Activated CD8-positive, alpha-beta T cell treated with anti-CD3 and anti-CD28 coated beads, Interleukin-2, amount 10 ng/mL, durations not matched to agents 7 days and 5 days (primary cell): ENCODE measurements at regions of chr1 and their contacts with region 1.

Region 1: DNA sequence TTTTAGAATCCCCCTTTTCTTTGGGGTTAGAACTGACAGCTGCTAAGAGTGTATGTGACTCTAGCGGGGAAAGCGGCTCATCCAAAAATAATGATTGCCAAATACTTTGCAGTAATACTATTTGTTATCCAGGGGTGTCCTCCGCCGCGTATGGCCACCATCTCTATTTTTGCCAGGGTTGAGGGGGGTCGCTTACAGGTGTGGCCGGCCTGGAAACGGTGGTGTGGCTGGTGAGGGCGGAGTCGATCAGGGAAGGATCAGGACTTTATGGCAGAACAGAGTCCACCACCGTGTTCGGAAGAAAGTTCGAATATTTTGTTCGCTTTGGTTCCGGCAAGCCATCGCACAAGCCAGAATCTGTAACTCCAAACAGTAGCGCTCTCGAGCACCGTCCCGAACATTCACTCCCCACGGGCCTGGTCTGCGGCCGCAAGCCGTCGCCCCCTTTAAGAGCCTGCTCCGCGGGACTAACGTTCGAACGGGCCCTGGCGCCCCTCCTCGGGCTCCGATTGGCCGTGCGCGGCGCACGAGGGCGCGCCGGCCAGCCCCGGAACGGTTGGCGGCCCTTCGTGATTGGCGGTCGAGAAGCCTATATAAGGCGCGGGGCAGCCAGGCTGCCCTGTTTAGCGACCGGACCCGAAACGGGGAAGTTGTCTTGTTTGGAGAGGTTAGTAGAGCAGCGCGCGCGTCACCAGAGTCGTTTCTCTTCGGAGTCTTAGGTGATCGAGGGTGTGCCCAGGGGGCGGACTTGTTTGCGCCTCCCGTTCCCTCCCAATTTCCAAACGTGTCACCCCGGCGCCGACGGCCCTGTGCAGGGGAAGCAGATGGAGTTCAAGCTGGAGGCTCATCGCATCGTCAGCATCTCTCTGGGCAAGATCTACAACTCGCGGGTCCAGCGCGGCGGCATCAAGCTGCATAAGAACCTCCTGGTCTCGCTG is at the start of gene IER5:
- DNase-seq: peak; percentile 97
- ATAC-seq: peak; percentile 80
- H3K4me3 Mint-ChIP-seq: peak within 1 kb of the TSS; percentile 97
- H3K27ac Mint-ChIP-seq: peak within 1 kb of the TSS; percentile 97
- H3K4me1 Mint-ChIP-seq: peaks cover 53% of the 10 kb centered on the region
- H3K27me3 Mint-ChIP-seq: peaks cover 3% of the 10 kb centered on the region
- total RNA-seq, gene IER5: 37.2 to 38.0 TPM

Region 2: DNA sequence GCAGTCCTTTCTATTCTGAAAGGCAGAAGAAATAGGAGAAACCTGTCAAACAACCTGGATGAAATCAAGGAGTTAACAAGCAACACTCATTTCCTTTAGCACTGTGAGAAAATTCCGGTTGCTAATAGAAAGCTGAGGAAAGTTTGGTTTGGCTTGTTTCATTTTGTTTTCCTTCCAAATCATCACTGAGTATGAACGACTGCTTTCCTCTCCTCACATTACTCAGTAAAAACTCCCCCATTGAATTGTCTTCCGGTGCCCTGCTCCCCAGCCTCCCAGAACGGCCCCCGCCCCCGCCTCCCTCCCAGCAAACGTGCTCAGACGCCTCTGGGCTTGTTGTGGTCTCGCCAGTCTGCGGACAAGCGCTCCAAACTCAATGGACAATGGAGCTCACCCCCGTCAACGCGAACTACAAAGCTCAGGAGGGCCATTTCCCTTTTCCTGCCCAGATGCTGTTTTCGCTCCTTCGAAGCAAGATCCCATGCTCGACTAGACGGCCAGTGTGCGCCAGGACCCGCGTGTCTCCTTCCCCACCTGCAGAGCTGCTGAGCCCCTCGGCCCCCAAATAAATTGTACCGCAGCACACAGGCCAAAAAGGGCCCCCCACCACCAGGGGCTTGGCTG is 66.4 kb before region 1 on chr1:
- CTCF ChIA-PET with region 1: interaction called, 3 read pairs
- POLR2A ChIA-PET with region 1: interaction called, 36 read pairs
- DNase-seq: peak; percentile 72
- ATAC-seq: peak; percentile 38
- H3K4me3 Mint-ChIP-seq: peak overlapping the region; percentile 93
- H3K27ac Mint-ChIP-seq: peak overlapping the region; percentile 93
- H3K4me1 Mint-ChIP-seq: peaks cover 51% of the 10 kb centered on the region
- H3K27me3 Mint-ChIP-seq: peaks cover 18% of the 10 kb centered on the region

Region 3: GRCh38 chr1:181044449-181044966 is 43.8 kb before region 1 on chr1:
- CTCF ChIA-PET with region 1: interaction called, 42 read pairs
- POLR2A ChIA-PET with region 1: interaction called, 23 read pairs
- DNase-seq: peak; percentile 63
- ATAC-seq: peak; percentile 90
- H3K4me3 Mint-ChIP-seq: peak overlapping the region; percentile 26
- H3K27ac Mint-ChIP-seq: peak overlapping the region; percentile 88
- H3K4me1 Mint-ChIP-seq: peaks cover 56% of the 10 kb centered on the region
- H3K27me3 Mint-ChIP-seq: no peaks in the 10 kb centered on the region

Region 4: DNA sequence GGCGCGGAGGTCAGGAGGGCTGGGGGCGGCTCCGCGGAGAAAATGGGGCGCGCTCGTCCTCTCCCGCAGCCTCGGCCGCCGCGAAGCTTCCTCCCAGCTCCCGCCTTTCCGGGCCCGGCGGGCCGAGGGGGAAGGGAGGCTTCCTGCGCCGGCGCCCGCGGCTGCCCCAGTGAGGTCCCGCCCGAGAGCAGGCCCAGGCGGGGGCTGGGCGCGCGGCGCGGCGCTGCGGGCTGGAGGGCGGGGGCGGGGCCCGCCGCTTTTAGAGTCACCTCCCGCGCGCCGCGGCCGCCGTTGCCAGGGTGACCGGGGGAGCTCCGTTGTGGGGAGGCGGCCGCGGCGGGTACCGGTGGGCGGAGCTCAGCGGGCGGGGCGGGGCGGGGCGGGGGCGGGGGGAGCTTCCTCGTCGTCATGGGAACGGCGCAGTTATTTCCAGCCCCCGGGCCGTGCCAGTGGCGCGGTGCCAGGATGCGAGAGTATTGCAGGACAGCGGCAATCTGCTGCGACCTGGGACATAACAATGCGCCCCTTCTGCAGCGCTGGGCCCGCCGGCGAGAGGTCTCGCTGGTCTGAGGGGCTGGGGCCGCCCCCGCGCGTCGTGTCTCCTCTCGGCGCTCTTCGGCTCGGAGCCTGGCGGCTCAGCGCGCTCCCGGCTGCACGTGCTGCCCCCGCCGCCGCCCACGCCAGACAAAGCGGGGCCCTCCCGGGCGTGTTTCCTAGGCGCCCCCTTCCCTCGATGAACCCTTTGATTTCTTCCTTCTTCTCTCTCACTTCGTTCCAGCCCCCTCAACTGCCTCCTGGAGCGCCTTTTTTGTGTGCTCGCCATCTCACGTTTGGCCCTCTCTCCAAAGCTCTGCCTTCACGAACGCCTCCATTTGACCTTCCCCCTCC is 17.0 kb after region 1 on chr1:
- CTCF ChIA-PET with region 1: interaction called, 49 read pairs
- POLR2A ChIA-PET with region 1: interaction called, 200 read pairs
- DNase-seq: peak; percentile 93
- ATAC-seq: peak; percentile 81
- H3K4me3 Mint-ChIP-seq: peak overlapping the region; percentile 80
- H3K27ac Mint-ChIP-seq: peak overlapping the region; percentile 74
- H3K4me1 Mint-ChIP-seq: peaks cover 67% of the 10 kb centered on the region
- H3K27me3 Mint-ChIP-seq: peaks cover 37% of the 10 kb centered on the region

Region 5: DNA sequence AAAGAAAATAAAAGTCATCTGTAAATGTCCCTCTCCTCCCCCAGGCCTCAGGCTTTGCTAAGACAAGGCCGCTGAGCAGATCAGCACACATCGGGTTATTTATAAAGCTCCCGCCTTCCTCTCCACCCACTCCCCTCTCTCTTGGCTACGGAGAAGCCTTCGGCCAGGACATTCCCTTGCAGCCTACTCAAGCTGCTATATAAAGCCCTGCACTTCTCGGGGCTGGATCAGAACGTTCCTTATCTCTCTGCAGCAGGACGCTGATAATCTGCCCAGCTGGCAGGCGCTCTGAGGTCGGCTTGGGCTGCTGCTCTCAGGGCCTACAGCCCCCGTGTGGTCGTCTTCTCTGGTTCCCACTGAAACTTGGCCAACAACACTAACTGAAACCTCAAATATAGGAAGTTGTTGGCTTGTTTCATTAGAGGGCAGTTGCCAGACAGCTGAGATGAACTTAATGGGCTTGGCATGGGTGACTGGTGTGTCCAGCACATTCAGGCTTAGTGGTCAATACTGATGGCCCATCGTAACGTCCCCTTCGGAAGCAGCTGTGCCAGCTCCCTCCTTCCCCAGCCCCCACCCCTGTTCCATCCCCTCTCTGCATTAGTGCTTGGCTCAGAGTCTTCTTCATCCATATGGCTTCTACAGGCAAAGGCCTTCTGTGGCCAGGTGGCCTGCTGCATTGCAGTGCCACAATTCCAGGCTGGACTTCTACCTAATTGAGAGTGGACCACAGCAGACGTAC is 64.7 kb after region 1 on chr1:
- CTCF ChIA-PET with region 1: interaction called, 11 read pairs
- POLR2A ChIA-PET with region 1: interaction called, 17 read pairs
- DNase-seq: no peak
- ATAC-seq: no peak
- H3K4me3 Mint-ChIP-seq: no peak overlapping the region
- H3K27ac Mint-ChIP-seq: no peak overlapping the region
- H3K4me1 Mint-ChIP-seq: peaks cover 55% of the 10 kb centered on the region
- H3K27me3 Mint-ChIP-seq: peaks cover 16% of the 10 kb centered on the region